Transverse colon (tissue), 4 donors: ENCODE measurements at regions of chr10 and their contacts with region 1.

Region 1: GRCh38 chr10:110746254-110746826 is 102.2 kb downstream of the RBM20 start:
- DNase-seq: peak; percentile 74
- H3K4me3 ChIP-seq: no peak overlapping the region
- H3K27ac ChIP-seq: no peak overlapping the region
- H3K4me1 ChIP-seq: peaks cover 0 to 18% (median 1%) of the 10 kb centered on the region in 4 donors
- H3K27me3 ChIP-seq: no peaks in the 10 kb centered on the region
- CTCF ChIP-seq: peak; percentile 77 to 87 (median 82)
- EP300 ChIP-seq: no peak
- POLR2A ChIP-seq: no peak

Region 2: DNA sequence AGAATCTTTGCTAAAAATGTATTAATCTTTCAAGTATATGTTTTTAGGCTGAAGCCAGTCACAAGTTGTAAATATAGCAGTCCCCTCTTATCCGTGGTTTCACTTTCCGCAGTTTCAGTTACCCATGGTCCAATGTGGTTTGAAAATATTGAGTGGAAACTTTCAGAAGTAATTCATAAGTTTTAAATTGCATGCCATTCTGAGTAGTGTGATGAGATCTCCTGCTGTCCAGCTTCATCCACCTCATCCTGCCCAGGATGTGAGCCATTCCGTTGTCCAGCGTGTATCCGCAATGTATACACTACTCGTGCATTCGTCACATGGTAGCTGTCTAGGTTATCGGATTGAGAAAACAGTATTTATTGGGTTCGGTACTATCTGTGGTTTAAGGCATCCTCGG is 137.6 kb after region 1 on chr10:
- in situ Hi-C with region 1: loop called in 2 of 4 experiments (anchors 5 to 10 kb)
- intact Hi-C with region 1: no loop called
- DNase-seq: no peak
- H3K4me3 ChIP-seq: no peak overlapping the region
- H3K27ac ChIP-seq: peak overlapping the region in 3 of 4 donors; percentile 4 to 45 (median 9)
- H3K4me1 ChIP-seq: peaks cover 4 to 69% (median 31%) of the 10 kb centered on the region in 4 donors
- H3K27me3 ChIP-seq: no peaks in the 10 kb centered on the region
- CTCF ChIP-seq: no peak
- EP300 ChIP-seq: no peak
- POLR2A ChIP-seq: no peak

Region 3: DNA sequence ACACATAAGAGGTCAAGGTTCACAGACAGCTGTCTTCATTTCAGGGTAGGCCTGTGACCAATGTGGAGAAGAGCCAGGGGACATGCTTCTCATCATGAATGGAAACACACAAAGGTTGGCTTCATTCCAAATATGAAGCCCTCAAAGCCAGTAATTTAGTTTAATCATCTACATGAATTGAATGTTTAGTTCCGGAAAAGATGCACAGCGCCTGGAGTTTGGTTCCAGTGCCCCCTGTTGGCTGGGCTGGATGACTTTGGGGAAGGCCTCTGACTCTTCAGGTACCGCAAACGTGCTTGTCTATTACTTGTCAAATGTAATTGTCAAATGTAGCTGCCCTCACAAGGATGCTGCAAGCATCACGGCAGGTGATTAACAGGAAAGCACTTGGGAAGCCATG is 461.2 kb after region 1 on chr10:
- in situ Hi-C with region 1: loop called in 1 of 4 experiments (anchors 25 kb)
- intact Hi-C with region 1: no loop called
- DNase-seq: peak; percentile 67
- H3K4me3 ChIP-seq: no peak overlapping the region
- H3K27ac ChIP-seq: no peak overlapping the region
- H3K4me1 ChIP-seq: peaks cover 0 to 6% (median 0%) of the 10 kb centered on the region in 4 donors
- H3K27me3 ChIP-seq: no peaks in the 10 kb centered on the region
- CTCF ChIP-seq: peak; percentile 25 to 77 (median 51)
- EP300 ChIP-seq: no peak
- POLR2A ChIP-seq: no peak

Region 4: GRCh38 chr10:111709603-111710002 is 963.3 kb after region 1 on chr10:
- in situ Hi-C with region 1: no loop called
- intact Hi-C with region 1: no loop called
- DNase-seq: no peak
- H3K4me3 ChIP-seq: no peak overlapping the region
- H3K27ac ChIP-seq: no peak overlapping the region
- H3K4me1 ChIP-seq: no peaks in the 10 kb centered on the region
- H3K27me3 ChIP-seq: no peaks in the 10 kb centered on the region
- CTCF ChIP-seq: no peak
- EP300 ChIP-seq: no peak
- POLR2A ChIP-seq: no peak